ENCODE measurements at regions of chr12 and their contacts with region 1.

Region 1: DNA sequence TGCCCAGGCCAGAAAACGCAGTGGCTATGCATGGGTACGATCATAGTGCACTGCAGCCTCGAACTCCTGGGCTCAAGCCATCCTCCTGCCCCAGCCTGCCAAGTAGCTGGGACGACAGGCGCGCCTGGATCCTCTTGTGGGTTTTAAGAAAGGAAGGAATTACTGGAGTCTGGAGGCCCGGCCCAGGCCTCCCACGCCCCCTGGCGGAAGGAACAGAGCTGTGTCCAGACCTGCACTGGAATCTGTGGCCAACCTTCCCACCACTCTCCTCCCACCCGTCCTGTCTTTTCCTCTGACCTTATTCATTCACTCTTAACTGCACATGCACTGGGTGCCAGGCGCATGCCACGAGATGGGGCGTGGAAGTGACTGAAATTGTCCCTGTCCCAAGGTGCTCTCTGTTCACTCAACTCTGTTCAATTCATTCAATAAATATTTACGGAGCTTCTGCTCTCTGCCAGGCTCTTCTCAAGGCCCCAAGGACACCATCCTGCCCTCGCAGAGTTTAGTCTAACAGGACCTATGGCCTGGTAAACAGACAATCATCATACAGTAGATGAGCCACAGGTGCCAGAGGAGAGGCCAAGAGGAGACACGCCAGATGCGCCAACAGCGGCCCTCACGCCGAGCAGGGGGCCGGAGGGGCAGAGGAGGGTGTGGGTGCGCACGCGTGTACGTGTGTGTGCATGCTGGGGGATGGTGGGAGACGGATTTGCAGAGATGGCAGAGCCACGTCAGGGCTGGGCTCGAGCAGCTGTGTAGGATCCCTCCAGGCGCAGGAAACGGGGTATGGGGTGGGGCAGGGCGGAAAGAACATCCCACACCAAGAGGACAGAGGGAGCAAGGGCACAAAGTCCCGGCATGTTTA is 13.7 kb upstream of the TMEM106C start:
- DNase-seq: peak; percentile 78
- ATAC-seq: peak; percentile 83
- H3K4me3 Mint-ChIP-seq: no peak overlapping the region
- H3K27ac Mint-ChIP-seq: peak overlapping the region; percentile 10
- H3K4me1 Mint-ChIP-seq: peaks cover 10% of the 10 kb centered on the region
- H3K27me3 Mint-ChIP-seq: peaks cover 3% of the 10 kb centered on the region

Region 2: GRCh38 chr12:47797441-47797840 is 152.2 kb before region 1 on chr12:
- CTCF ChIA-PET with region 1: no interaction called
- POLR2A ChIA-PET with region 1: no interaction called
- intact Hi-C with region 1: loop called in 1 of 2 experiments (anchors 5 kb)
- DNase-seq: peak; percentile 57
- ATAC-seq: peak; percentile 44
- H3K4me3 Mint-ChIP-seq: no peak overlapping the region
- H3K27ac Mint-ChIP-seq: peak overlapping the region; percentile 42
- H3K4me1 Mint-ChIP-seq: peaks cover 35% of the 10 kb centered on the region
- H3K27me3 Mint-ChIP-seq: no peaks in the 10 kb centered on the region

Region 3: GRCh38 chr12:47863467-47863866 is 86.2 kb before region 1 on chr12:
- CTCF ChIA-PET with region 1: interaction called, 7 read pairs
- POLR2A ChIA-PET with region 1: no interaction called
- intact Hi-C with region 1: loop called (anchors 5 kb)
- DNase-seq: no peak
- ATAC-seq: no peak
- H3K4me3 Mint-ChIP-seq: no peak overlapping the region
- H3K27ac Mint-ChIP-seq: peak overlapping the region; percentile 31
- H3K4me1 Mint-ChIP-seq: peaks cover 73% of the 10 kb centered on the region
- H3K27me3 Mint-ChIP-seq: no peaks in the 10 kb centered on the region

Region 4: GRCh38 chr12:47870175-47870781 is 79.4 kb before region 1 on chr12:
- CTCF ChIA-PET with region 1: interaction called, 7 read pairs
- POLR2A ChIA-PET with region 1: no interaction called
- intact Hi-C with region 1: loop called in 1 of 2 experiments (anchors 5 kb)
- DNase-seq: no peak
- ATAC-seq: no peak
- H3K4me3 Mint-ChIP-seq: no peak overlapping the region
- H3K27ac Mint-ChIP-seq: peak overlapping the region; percentile 85
- H3K4me1 Mint-ChIP-seq: peaks cover 66% of the 10 kb centered on the region
- H3K27me3 Mint-ChIP-seq: no peaks in the 10 kb centered on the region

Region 5: DNA sequence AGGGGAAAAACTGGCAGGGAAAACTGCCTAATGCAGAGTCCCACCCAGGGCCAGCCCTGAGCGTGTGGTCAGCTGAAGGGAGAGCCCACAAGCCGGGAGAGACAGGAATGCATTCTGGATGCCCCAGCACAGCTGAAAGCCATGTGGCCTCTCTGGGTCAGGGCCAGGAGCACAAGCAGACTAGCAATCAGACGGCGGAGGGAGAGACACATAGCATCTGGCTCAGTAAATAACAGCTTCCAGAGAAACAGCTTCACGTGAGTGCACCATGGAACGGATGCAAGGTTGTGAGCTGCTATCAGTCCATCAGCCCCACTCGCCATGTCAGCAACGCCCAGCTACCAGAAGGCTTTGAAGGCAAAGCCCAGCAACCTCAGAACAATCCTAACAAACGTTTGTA is 14.5 kb before region 1 on chr12:
- CTCF ChIA-PET with region 1: interaction called, 9 read pairs
- POLR2A ChIA-PET with region 1: no interaction called
- intact Hi-C with region 1: loop called in 1 of 2 experiments (anchors 1 kb)
- DNase-seq: no peak
- ATAC-seq: no peak
- H3K4me3 Mint-ChIP-seq: no peak overlapping the region
- H3K27ac Mint-ChIP-seq: no peak overlapping the region
- H3K4me1 Mint-ChIP-seq: no peaks in the 10 kb centered on the region
- H3K27me3 Mint-ChIP-seq: no peaks in the 10 kb centered on the region

Measured in activated CD4-positive, alpha-beta T cell treated with anti-CD3 and anti-CD28 coated beads for 36 hours (primary cell).